ENCODE measurements at regions of chrX and their contacts with region 1.

Region 1: GRCh38 chrX:71076487-71076886 is 8.4 kb upstream of the SNX12 start:
- DNase-seq: no peak
- H3K4me3 ChIP-seq: no peak overlapping the region
- H3K27ac ChIP-seq: no peak overlapping the region
- H3K4me1 ChIP-seq: no peaks in the 10 kb centered on the region
- H3K27me3 ChIP-seq: peaks cover 0 to 30% of the 10 kb centered on the region in 2 donors
- CTCF ChIP-seq: no peak
- POLR2A ChIP-seq: no peak

Region 2: GRCh38 chrX:71118032-71118984 is 41.8 kb after region 1 on chrX and contains the start of gene MED12:
- intact Hi-C with region 1: loop called (anchors 2 kb)
- DNase-seq: peak; percentile 70 to 74
- H3K4me3 ChIP-seq: peak within 1 kb of the TSS; percentile 57 to 68 (median 61)
- H3K27ac ChIP-seq: peak within 1 kb of the TSS; percentile 83 to 86
- H3K4me1 ChIP-seq: no peaks in the 10 kb centered on the region
- H3K27me3 ChIP-seq: peaks cover 0 to 13% of the 10 kb centered on the region in 2 donors
- CTCF ChIP-seq: no peak
- POLR2A ChIP-seq: no peak
- total RNA-seq, gene MED12: 32.1 to 34.7 (median 33.9) TPM

Region 3: DNA sequence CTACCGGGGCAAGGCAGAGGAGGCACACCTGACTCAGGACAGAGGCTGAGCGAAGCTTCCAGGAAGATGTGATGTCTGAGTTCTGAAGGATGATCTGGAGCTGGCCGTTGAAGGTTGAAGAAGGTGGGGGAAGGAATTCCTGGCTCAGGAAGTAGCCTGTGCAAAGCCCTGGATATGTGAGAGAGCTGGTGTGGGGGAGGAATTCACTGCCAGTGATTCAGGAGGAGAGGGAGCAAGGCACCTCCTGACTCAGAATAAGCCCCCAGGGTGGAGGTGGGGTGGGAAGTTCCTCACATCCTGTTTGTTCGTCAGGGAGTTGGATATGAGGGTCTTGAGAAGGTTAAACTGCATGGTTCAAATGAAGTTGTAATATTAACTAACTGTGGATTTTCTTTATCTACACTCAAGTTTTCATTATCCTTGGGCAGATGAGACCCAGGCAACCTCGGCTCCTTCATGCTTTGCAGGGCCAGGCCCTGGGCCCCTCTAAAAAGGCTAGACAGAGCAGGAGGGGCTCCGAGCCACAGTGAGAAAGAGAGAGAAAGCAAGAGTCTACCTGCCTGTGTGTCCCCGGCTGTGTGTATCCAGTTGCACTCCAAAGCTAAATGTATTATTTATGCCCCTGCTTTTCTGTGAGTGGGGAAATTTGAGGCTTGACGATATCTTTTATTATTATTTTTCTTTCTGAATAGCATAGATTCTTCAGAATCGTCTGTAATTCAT is 841.3 kb after region 1 on chrX:
- intact Hi-C with region 1: no loop called
- DNase-seq: no peak
- H3K4me3 ChIP-seq: no peak overlapping the region
- H3K27ac ChIP-seq: no peak overlapping the region
- H3K4me1 ChIP-seq: no peaks in the 10 kb centered on the region
- H3K27me3 ChIP-seq: peaks cover 0 to 65% of the 10 kb centered on the region in 2 donors
- CTCF ChIP-seq: no peak
- POLR2A ChIP-seq: no peak

Measured in breast epithelium (tissue), 4 donors.